ENCODE measurements at regions of chr17 and their contacts with region 1.

Region 1: GRCh38 chr17:75487351-75488070 is 27.8 kb downstream of the CASKIN2 start:
- DNase-seq: peak in 8 of 9 donors; percentile 35 to 67 (median 62)
- ATAC-seq: peak; percentile 83
- H3K4me3 ChIP-seq: peak overlapping the region; percentile 49
- H3K4me3 Mint-ChIP-seq: peak overlapping the region; percentile 75 to 88 (median 80)
- H3K27ac ChIP-seq: peak overlapping the region; percentile 73
- H3K27ac Mint-ChIP-seq: peak overlapping the region; percentile 94 to 98 (median 96)
- H3K4me1 ChIP-seq: peaks cover 16 to 25% of the 10 kb centered on the region in 2 donors
- H3K4me1 Mint-ChIP-seq: peaks cover 18 to 39% (median 24%) of the 10 kb centered on the region in 7 donors
- H3K27me3 ChIP-seq: no peaks in the 10 kb centered on the region
- H3K27me3 Mint-ChIP-seq: no peaks in the 10 kb centered on the region

Region 2: DNA sequence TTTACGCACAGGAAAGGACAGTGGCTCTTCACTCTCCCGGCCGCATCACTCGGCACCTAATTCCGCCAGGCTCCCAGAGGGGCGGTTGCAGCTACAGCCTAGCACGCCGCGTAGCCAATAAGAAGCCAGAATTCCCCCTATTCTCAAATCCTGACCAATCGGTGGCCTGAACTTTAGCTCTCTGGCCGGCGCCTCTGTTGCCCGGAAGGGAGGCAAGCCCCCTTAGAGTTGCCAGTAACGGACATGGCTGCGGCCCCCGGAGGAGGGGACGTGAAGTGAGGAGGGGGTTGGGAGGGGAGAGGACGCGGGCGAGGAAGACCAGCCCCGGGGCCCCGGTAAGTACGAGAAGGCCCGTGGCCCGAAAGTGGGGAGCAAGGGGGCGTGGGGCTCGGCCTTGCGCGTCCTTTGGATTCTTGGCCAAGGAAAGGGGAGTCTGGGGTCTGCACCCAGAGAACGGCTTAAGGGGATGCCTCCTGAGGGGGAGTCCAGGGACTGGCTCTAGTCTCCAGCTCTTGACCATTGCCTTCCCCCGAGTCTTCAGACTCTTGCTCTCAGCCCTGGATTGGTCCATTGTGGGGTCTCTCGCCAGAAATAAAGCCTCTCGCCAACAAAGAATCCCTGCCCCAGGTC is 31.0 kb before region 1 on chr17 and contains the start of gene TMEM94:
- CTCF ChIA-PET with region 1: interaction called, 4 read pairs
- POLR2A ChIA-PET with region 1: interaction called, 28 read pairs
- intact Hi-C with region 1: loop called in 1 of 2 experiments (anchors 1 kb)
- DNase-seq: peak; percentile 70 to 93 (median 89)
- ATAC-seq: peak; percentile 98
- H3K4me3 ChIP-seq: peak within 1 kb of the TSS; percentile 99
- H3K4me3 Mint-ChIP-seq: peak within 1 kb of the TSS; percentile 92 to 99 (median 94)
- H3K27ac ChIP-seq: peak within 1 kb of the TSS; percentile 74
- H3K27ac Mint-ChIP-seq: peak within 1 kb of the TSS; percentile 84 to 99 (median 93)
- H3K4me1 ChIP-seq: peaks cover 10% of the 10 kb centered on the region in 2 donors
- H3K4me1 Mint-ChIP-seq: peaks cover 25 to 42% (median 34%) of the 10 kb centered on the region in 7 donors
- H3K27me3 ChIP-seq: no peaks in the 10 kb centered on the region
- H3K27me3 Mint-ChIP-seq: no peaks in the 10 kb centered on the region
- total RNA-seq, gene TMEM94: 74.1 to 97.2 (median 81.9) TPM

Region 3: DNA sequence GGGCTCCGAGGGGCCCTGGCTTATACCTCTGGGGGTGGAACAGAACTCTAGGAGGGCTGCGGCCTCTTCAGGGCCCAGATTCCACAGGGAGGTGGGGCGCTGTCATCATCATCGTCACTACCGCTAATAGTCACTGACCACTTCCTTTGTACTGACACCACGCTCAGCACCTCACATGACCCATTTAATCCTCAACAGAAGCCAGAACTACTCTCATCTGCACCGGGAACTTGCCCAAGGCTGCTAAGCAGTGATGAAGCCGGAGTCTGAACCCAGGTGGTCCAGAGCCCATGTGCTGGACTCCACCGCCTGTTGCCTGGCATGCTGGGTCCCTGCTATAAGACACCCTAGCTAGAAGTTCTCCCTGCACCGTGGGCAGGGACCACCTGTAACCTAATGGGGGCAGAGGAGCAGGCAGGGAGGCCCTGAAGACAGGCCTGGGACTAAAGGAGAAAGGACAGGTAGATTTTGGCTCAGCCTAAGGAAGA is 344.7 kb after region 1 on chr17:
- CTCF ChIA-PET with region 1: no interaction called
- POLR2A ChIA-PET with region 1: no interaction called
- intact Hi-C with region 1: no loop called
- DNase-seq: peak in 1 of 9 donors; percentile 18
- ATAC-seq: peak; percentile 69
- H3K4me3 ChIP-seq: peak overlapping the region; percentile 22
- H3K4me3 Mint-ChIP-seq: peak overlapping the region; percentile 66 to 81 (median 76)
- H3K27ac ChIP-seq: peak overlapping the region; percentile 64
- H3K27ac Mint-ChIP-seq: peak overlapping the region; percentile 79 to 95 (median 92)
- H3K4me1 ChIP-seq: peaks cover 33 to 35% of the 10 kb centered on the region in 2 donors
- H3K4me1 Mint-ChIP-seq: peaks cover 27 to 37% (median 31%) of the 10 kb centered on the region in 7 donors
- H3K27me3 ChIP-seq: no peaks in the 10 kb centered on the region
- H3K27me3 Mint-ChIP-seq: no peaks in the 10 kb centered on the region

Measured in naive thymus-derived CD4-positive, alpha-beta T cell (primary cell).